Dorsolateral prefrontal cortex (tissue), 120 donors: ENCODE measurements at regions of chr12 and their contacts with region 1.

Region 1: DNA sequence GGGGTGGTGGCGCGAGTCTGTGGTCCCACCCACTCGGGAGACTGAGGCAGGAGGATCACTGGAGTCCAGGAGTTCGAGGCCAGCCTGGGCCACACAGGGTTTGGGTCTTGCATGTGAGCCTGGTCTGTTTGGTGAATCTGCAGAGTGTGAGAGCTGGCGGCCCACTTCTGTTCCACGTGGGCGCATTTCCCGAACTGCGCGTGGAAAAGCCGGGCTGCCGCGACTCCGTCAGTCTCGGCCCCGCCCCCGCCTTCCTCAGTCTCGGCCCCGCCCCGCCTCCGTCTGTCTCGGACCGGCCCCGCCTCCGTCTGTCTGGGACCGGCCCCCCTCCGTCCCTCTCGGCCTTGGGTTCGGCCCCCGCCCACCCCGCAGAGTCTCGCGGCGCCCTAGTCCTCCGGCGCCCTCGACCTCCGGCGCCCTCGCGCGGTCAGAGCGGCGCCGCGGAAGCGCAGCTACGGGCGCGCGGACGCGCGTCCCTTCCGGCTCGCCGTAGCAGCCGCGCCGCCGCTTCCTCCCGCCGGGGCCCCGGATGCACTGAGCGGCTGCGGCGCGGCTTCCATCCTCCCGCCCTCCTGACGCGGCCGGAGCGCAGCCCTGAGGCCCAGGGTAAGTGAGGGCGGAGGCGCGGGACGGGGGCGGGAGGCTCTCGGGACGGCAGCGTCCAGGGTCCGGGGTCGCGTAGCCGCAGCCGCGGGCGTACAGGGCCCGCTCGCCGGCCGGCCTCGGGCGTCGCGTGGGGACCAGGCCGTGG is at the start of gene EP400:
- DNase-seq: peak; percentile 86 to 95 (median 91)
- H3K4me3 ChIP-seq: peak within 1 kb of the TSS; percentile 69 to 100 (median 93)
- H3K27ac ChIP-seq: peak within 1 kb of the TSS in 56 of 59 donors; percentile 5 to 90 (median 75)
- H3K27me3 ChIP-seq: no peaks in the 10 kb centered on the region
- CTCF ChIP-seq: peak in 55 of 56 donors; percentile 26 to 83 (median 59)
- total RNA-seq, gene EP400: 52.1 to 79.5 (median 64.6) TPM

Region 2: DNA sequence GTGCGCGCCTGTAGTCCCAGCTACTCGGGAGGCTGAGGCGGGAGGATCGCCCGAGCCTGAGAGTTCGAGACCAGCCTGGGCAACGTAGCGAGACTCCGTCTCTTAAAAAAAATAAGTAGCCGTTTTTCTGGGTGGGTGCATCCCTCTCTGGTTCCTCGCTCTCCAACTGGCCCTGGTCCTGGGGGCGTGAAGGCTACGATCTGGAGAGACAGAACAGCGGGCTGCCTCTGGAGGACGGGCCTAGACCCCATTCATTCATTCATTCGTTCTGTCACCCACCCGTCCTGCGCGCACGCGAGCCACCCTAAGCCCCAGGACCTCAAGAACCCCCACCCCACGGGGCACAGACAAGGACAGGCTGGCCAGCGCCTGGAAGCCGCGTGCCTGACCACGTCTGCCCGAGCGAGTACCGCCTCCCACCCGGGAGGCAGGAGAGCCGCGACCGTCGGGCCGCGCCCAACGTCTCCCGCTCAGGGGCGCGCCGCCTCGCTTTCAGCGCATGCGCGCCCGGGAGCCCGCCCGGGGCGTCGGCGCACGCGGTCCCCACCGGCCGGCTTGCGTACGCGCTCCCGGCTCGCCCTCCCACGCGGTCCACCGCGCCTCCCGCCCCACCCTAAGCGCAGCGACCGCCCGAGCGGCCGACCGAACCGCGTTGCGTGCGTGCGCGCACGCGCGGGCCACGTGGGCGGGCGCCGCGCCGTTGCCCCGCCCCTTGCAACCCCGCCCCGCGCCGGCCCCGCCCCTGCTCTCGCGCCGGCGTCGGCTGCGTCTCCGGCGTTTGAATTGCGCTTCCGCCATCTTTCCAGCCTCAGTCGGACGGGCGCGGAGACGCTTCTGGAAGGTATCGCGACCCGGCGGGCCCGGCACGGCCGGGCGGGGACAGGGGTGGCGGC is 1078.1 kb before region 1 on chr12 and contains the start of gene RAN:
- intact Hi-C with region 1: loop called in 1 of 2 experiments (anchors 10 kb)
- DNase-seq: peak; percentile 69 to 94 (median 89)
- H3K4me3 ChIP-seq: peak within 1 kb of the TSS; percentile 62 to 94 (median 82)
- H3K27ac ChIP-seq: peak within 1 kb of the TSS; percentile 70 to 96 (median 90)
- H3K27me3 ChIP-seq: no peaks in the 10 kb centered on the region
- CTCF ChIP-seq: peak in 11 of 56 donors; percentile 11 to 31 (median 25)
- total RNA-seq, gene RAN: 207 to 502 (median 388) TPM

Region 3: GRCh38 chr12:131592972-131593371 is 356.6 kb before region 1 on chr12:
- intact Hi-C with region 1: no loop called
- DNase-seq: no peak
- H3K4me3 ChIP-seq: no peak overlapping the region
- H3K27ac ChIP-seq: no peak overlapping the region
- H3K27me3 ChIP-seq: no peaks in the 10 kb centered on the region
- CTCF ChIP-seq: no peak

Region 4: DNA sequence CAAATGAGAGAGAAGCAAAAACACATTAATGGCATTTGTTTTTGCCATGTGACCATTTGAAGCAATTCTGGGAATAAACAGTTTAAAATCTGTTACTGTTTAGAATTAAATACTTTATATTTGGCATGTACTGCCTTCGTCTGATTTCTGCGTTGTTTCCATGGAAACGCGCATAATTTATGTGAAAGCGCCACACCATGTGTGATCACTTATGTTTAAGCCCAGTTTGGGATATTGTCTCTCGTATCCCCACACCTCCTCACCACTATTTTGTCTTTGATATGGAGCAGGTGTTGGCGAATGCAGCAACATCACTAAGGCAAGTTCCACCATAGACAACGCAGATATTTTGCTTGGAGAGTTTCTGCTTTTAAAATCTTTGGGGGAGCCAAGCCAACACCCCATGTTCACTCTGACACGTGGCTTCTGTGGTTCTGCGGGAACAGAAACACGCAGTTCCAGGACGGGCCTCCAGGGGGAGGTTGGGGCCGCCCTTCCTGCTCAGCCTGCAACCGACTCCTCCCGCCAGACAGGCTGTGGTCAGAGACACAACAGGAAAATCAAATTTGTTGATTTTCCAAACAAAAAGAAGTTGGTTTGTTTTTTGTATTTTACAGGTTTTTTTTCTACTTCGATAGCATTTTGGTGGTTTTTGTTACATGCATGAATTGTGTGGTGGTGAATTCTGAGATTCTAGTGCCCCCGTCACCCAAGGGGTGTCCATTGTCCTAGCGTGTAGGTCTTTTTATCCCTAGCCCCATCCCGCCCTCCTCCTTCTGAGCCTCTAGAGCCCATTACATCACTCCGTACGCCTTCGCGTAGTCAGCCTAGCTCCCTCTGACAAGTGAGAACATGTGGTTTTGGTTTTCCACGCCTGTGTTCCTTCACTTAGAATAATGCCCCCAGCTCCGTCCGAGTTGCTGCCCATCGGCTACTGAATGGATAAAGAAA is 340.6 kb before region 1 on chr12:
- intact Hi-C with region 1: loop called in 1 of 2 experiments (anchors 5 kb)
- DNase-seq: peak; percentile 81 to 89 (median 86)
- H3K4me3 ChIP-seq: peak overlapping the region in 23 of 59 donors; percentile 1 to 43 (median 13)
- H3K27ac ChIP-seq: peak overlapping the region in 40 of 59 donors; percentile 0 to 75 (median 52)
- H3K27me3 ChIP-seq: no peaks in the 10 kb centered on the region
- CTCF ChIP-seq: peak; percentile 69 to 99 (median 94)

Region 5: GRCh38 chr12:131755305-131756113 is 194.1 kb before region 1 on chr12:
- intact Hi-C with region 1: no loop called
- DNase-seq: peak in 2 of 10 donors; percentile 42 to 60
- H3K4me3 ChIP-seq: no peak overlapping the region
- H3K27ac ChIP-seq: peak overlapping the region in 41 of 59 donors; percentile 3 to 87 (median 47)
- H3K27me3 ChIP-seq: no peaks in the 10 kb centered on the region
- CTCF ChIP-seq: peak in 25 of 56 donors; percentile 3 to 42 (median 17)

Region 6: DNA sequence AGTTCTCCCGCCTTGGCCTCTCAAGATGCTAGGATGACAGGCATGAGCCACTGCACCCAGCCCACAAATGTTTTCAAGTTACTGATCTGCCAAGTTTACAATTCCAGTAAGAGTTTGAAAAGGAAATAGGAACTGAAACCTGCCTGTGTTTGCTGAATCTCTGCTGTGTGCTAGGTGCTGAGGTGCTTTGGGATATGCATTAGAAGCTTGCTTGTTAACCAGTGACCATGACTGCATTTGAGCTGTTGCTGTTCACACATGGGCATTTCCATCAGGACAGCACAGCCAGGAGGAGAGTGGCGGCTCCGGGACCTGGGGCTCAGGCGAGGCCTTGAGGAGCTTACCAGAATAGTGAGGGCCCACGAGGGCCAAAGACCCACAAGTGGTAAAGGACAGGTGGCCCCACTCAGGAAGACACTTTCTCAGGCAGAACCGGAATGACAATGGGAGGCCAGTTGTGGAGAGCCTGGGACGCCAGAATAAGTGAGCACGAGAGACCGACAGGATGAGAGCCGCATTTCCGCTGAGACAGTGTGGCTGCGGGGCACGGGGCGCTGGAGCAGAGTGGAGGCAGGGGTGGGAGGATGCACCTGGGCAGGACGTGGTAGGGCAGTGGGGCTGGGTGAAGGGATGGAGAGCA is 175.9 kb before region 1 on chr12:
- intact Hi-C with region 1: no loop called
- DNase-seq: no peak
- H3K4me3 ChIP-seq: no peak overlapping the region
- H3K27ac ChIP-seq: peak overlapping the region in 11 of 59 donors; percentile 1 to 42 (median 27)
- H3K27me3 ChIP-seq: no peaks in the 10 kb centered on the region
- CTCF ChIP-seq: no peak

Region 7: DNA sequence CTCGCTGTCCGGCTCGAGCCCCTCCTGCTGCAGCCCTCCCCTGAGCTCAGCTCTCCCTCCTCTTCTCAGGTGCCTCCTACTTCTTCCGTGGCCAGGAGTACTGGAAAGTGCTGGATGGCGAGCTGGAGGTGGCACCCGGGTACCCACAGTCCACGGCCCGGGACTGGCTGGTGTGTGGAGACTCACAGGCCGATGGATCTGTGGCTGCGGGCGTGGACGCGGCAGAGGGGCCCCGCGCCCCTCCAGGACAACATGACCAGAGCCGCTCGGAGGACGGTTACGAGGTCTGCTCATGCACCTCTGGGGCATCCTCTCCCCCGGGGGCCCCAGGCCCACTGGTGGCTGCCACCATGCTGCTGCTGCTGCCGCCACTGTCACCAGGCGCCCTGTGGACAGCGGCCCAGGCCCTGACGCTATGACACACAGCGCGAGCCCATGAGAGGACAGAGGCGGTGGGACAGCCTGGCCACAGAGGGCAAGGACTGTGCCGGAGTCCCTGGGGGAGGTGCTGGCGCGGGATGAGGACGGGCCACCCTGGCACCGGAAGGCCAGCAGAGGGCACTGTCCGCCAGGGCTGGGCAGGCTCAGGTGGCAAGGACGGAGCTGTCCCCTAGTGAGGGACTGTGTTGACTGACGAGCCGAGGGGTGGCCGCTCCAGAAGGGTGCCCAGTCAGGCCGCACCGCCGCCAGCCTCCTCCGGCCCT is 98.6 kb before region 1 on chr12:
- intact Hi-C with region 1: loop called in 1 of 2 experiments (anchors 5 kb)
- DNase-seq: peak in 2 of 10 donors; percentile 47 to 67
- H3K4me3 ChIP-seq: peak overlapping the region in 2 of 59 donors; percentile 13 to 26
- H3K27ac ChIP-seq: peak overlapping the region in 4 of 59 donors; percentile 2 to 53 (median 24)
- H3K27me3 ChIP-seq: peaks cover 0 to 8% (median 0%) of the 10 kb centered on the region in 45 donors
- CTCF ChIP-seq: peak in 30 of 56 donors; percentile 27 to 82 (median 58)

Region 8: GRCh38 chr12:131928711-131929580 is 20.7 kb before region 1 on chr12 and contains the start of gene PUS1:
- intact Hi-C with region 1: loop called (anchors 1 kb)
- DNase-seq: peak; percentile 86 to 97 (median 94)
- H3K4me3 ChIP-seq: peak within 1 kb of the TSS; percentile 64 to 95 (median 85)
- H3K27ac ChIP-seq: peak within 1 kb of the TSS in 55 of 59 donors; percentile 20 to 92 (median 80)
- H3K27me3 ChIP-seq: no peaks in the 10 kb centered on the region
- CTCF ChIP-seq: peak in 28 of 56 donors; percentile 5 to 47 (median 20)
- total RNA-seq, gene PUS1: 14.3 to 37.0 (median 24.2) TPM